HAP-1 (cell line): ENCODE measurements at regions of chrX and their contacts with region 1.

Region 1: DNA sequence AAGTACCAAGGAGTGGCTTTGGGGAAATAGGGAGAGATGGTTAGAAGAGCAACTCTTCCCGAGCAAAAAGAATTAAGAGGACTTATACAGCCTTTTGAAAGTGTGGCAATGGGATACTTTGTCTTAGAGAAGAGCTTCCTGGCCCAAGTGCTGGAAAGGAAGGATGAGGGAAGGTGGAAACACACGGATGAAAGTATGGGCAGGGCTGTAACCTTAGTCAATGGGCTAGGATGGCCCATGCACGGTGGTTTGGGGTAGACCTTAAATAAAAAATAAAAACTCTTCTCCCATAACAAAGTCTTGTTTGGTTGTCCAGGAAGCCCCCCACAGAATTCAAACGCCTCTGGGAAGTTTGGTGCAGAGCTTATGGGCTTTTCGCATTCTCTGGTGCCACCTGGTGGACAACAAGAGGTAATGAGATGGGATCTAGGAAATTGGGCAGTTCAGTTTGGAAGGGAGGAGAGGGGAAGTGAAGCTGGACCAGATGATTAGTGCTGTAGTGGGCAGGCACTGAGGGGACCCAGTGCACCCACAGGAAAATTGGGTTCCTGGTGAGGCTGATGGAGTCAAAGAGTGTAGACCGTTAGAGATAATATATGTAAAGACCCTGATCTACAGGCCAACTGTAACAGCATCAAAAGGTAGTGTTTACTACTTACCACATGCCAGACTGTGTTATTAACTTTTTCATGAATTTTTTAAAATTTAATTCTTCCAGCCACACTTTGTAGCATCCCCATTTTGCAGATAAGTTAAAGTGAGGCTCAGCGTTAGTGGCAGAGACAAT is 13.8 kb upstream of the ENOX2 start:
- DNase-seq: peak; percentile 57 to 72
- H3K4me3 ChIP-seq: no peak overlapping the region
- H3K4me1 ChIP-seq: peaks cover 7% of the 10 kb centered on the region; the same call in 1 of the 2 replicates
- H3K27me3 ChIP-seq: no peaks in the 10 kb centered on the region

Region 2: GRCh38 chrX:130393451-130394074 is 523.3 kb before region 1 on chrX:
- in situ Hi-C with region 1: loop called (anchors 10 kb)
- DNase-seq: peak; percentile 59 to 70
- H3K4me3 ChIP-seq: no peak overlapping the region
- H3K4me1 ChIP-seq: no peaks in the 10 kb centered on the region
- H3K27me3 ChIP-seq: peaks cover 4% of the 10 kb centered on the region; the same call in 1 of the 2 replicates

Region 3: DNA sequence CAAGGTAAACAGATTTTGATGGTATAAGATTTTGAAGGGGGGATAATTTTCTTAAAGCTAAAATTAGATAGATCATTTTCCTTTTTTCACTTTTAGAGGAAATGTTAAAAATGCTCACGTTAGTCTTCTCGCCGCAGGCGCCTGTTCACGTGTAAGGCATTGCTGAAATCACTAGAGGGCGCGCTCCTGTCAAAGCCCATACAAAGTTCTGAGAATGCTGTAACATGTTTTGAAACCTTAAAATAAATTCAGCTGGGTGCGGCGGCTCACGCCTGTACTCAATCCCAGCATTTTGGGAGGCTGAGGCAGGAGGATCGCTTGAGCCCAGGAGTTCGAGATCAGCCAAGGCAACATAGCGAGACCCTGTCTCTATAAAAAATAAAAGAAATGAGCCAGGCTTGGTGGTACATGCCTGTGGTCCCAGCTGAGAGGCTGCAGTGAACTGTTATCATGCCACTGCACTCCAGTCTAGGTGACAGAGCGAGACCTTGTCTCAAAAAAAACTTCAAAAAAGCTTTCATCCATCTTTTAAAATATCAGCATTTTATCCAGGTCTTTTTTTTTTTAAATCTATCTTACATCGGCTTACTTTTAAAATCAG is 377.0 kb before region 1 on chrX:
- in situ Hi-C with region 1: loop called (anchors 5 kb)
- DNase-seq: peak; percentile 48 to 77
- H3K4me3 ChIP-seq: no peak overlapping the region
- H3K4me1 ChIP-seq: no peaks in the 10 kb centered on the region
- H3K27me3 ChIP-seq: no peaks in the 10 kb centered on the region; the same call in 1 of the 2 replicates

Region 4: GRCh38 chrX:130834149-130834548 is 82.7 kb before region 1 on chrX:
- in situ Hi-C with region 1: no loop called
- DNase-seq: peak; percentile 53 to 61
- H3K4me3 ChIP-seq: no peak overlapping the region
- H3K4me1 ChIP-seq: peaks cover 3% of the 10 kb centered on the region; the same call in 1 of the 2 replicates
- H3K27me3 ChIP-seq: no peaks in the 10 kb centered on the region

Region 5: GRCh38 chrX:131235768-131236545 is 319.1 kb after region 1 on chrX:
- in situ Hi-C with region 1: no loop called
- DNase-seq: no peak
- H3K4me3 ChIP-seq: no peak overlapping the region
- H3K4me1 ChIP-seq: no peaks in the 10 kb centered on the region
- H3K27me3 ChIP-seq: no peaks in the 10 kb centered on the region